Breast epithelium (tissue), 4 donors: ENCODE measurements at regions of chr4 and their contacts with region 1.

Region 1: GRCh38 chr4:26220698-26221097 is 100.1 kb upstream of the RBPJ start:
- DNase-seq: no peak
- H3K4me3 ChIP-seq: no peak overlapping the region
- H3K27ac ChIP-seq: no peak overlapping the region
- H3K4me1 ChIP-seq: no peaks in the 10 kb centered on the region
- H3K27me3 ChIP-seq: no peaks in the 10 kb centered on the region
- CTCF ChIP-seq: no peak
- POLR2A ChIP-seq: no peak

Region 2: DNA sequence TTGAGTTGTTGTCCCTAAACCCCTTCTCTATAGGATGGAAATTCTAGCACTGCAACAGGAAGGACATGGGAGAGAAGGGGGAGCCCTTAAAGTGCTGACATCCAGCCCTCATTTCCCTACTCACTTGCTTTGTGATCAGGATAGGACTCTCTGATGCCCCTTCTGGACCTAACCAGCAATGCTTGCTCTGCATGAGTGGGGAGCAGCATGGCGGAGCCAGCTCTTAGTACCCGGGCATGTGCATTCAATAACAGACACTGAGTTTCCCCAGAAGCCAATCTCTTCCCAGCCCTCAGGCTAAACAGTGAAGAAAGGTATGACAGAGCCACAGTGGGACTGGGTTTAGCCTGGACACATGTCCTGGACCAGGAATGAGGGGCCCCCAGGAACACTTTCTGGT is 1411.3 kb before region 1 on chr4:
- intact Hi-C with region 1: no loop called
- DNase-seq: no peak
- H3K4me3 ChIP-seq: no peak overlapping the region
- H3K27ac ChIP-seq: no peak overlapping the region
- H3K4me1 ChIP-seq: no peaks in the 10 kb centered on the region
- H3K27me3 ChIP-seq: no peaks in the 10 kb centered on the region
- CTCF ChIP-seq: no peak
- POLR2A ChIP-seq: no peak

Region 3: GRCh38 chr4:24965627-24966026 is 1255.1 kb before region 1 on chr4:
- intact Hi-C with region 1: loop called (anchors 10 kb)
- DNase-seq: no peak
- H3K4me3 ChIP-seq: no peak overlapping the region
- H3K27ac ChIP-seq: no peak overlapping the region
- H3K4me1 ChIP-seq: no peaks in the 10 kb centered on the region
- H3K27me3 ChIP-seq: no peaks in the 10 kb centered on the region
- CTCF ChIP-seq: no peak
- POLR2A ChIP-seq: no peak

Region 4: GRCh38 chr4:25811140-25811690 is 409.5 kb before region 1 on chr4:
- intact Hi-C with region 1: no loop called
- DNase-seq: no peak
- H3K4me3 ChIP-seq: no peak overlapping the region
- H3K27ac ChIP-seq: no peak overlapping the region
- H3K4me1 ChIP-seq: no peaks in the 10 kb centered on the region
- H3K27me3 ChIP-seq: no peaks in the 10 kb centered on the region
- CTCF ChIP-seq: no peak
- POLR2A ChIP-seq: no peak

Region 5: GRCh38 chr4:27357283-27357682 is 1136.6 kb after region 1 on chr4:
- intact Hi-C with region 1: loop called (anchors 10 kb)
- DNase-seq: no peak
- H3K4me3 ChIP-seq: no peak overlapping the region
- H3K27ac ChIP-seq: no peak overlapping the region
- H3K4me1 ChIP-seq: no peaks in the 10 kb centered on the region
- H3K27me3 ChIP-seq: no peaks in the 10 kb centered on the region
- CTCF ChIP-seq: no peak
- POLR2A ChIP-seq: no peak